Activated naive CD4-positive, alpha-beta T cell treated with anti-CD3 and anti-CD28 coated beads, Interleukin-2, amount 10 ng/mL, durations not matched to agents 7 days and 5 days (primary cell): ENCODE measurements at regions of chr4 and their contacts with region 1.

Region 1: DNA sequence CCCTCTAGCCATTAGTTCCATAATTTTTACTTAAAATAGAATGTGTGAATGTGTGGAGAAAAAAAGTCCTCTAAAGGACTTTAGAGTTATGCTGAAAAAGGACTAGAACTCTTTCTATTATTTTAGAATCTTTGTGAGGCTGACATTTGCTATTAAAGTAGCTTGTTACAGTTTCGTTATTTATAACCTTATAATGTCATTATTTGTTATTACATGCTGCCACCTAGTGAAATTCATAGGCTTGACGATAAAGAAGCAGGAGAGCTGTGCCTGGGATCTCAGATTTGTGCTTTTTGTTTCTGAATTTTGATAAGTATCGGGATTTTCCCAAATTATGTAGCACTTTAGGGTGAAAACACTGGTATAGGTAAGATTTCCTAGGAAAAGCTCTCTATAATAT is 38.5 kb upstream of the TAPT1 start:
- DNase-seq: no peak
- H3K4me3 Mint-ChIP-seq: no peak overlapping the region
- H3K27ac Mint-ChIP-seq: no peak overlapping the region
- H3K4me1 Mint-ChIP-seq: peaks cover 5% of the 10 kb centered on the region
- H3K27me3 Mint-ChIP-seq: peaks cover 12% of the 10 kb centered on the region

Region 2: DNA sequence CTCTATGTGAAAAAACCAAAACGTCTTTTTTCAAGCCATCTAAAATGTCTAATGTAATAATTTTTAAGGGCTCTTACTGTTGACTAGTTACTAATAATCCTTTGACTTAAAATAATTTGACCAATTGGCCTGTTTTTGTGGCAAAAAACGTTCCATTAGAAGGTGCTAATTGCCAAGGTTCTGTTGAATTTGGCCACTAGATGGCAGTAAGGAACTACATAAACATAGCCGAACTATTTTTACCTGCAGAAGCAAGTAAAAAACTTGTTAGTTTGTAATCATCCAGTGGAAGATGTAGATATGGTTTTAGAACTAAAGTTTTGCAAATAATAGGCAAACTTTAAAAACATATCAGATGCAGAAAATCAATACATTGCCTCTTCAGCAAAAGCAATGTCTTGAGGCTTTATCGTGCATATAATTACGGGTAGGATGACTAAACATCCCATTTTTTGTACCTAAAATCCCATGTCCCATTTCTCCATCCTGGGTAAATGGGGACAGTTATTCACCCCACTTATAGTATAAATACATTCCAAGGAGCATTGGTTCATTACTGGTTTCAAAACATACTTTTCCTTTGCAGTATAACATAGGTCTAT is 238.5 kb before region 1 on chr4:
- CTCF ChIA-PET with region 1: interaction called, 29 read pairs
- DNase-seq: peak; percentile 24
- H3K4me3 Mint-ChIP-seq: no peak overlapping the region
- H3K27ac Mint-ChIP-seq: no peak overlapping the region
- H3K4me1 Mint-ChIP-seq: no peaks in the 10 kb centered on the region
- H3K27me3 Mint-ChIP-seq: peaks cover 25% of the 10 kb centered on the region

Region 3: GRCh38 chr4:16196478-16197393 is 68.1 kb before region 1 on chr4:
- CTCF ChIA-PET with region 1: interaction called, 11 read pairs
- DNase-seq: no peak
- H3K4me3 Mint-ChIP-seq: no peak overlapping the region
- H3K27ac Mint-ChIP-seq: no peak overlapping the region
- H3K4me1 Mint-ChIP-seq: peaks cover 18% of the 10 kb centered on the region
- H3K27me3 Mint-ChIP-seq: no peaks in the 10 kb centered on the region